CD8-positive, alpha-beta T cell (primary cell): ENCODE measurements at regions of chr6 and their contacts with region 1.

Region 1: DNA sequence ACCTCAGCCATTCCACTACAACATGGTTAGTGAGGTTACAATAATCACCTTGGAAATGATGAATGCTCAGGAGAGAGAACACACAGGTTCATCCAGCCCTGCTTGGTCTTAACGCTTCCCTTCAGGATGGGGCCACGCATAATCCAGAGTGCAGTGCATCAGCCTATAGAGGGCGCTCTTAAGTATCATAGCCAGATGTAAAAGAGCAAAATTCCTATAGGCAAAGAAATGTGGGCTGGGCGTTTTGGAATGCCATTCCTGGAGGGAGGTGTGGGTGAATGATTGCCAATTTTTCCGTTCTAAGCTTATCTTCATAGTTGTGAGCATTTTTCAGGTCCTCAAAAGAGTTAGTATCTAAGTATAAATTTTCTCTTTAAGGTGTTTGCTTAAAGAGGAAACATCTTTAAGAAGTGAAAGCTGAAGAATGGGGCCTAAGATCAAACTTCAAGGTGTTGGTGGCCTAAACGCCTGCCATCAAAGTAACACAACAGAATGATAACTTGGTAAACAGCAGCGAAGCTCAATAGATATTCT is 1.8 kb downstream of the RIPOR2 start:
- DNase-seq: peak in 7 of 9 experiments; percentile 40 to 82 (median 59)
- ATAC-seq: no peak
- H3K4me3 ChIP-seq: peak overlapping the region; percentile 68 to 89
- H3K4me3 Mint-ChIP-seq: peak overlapping the region; percentile 97
- H3K27ac ChIP-seq: peak overlapping the region; percentile 73 to 80
- H3K27ac Mint-ChIP-seq: peak overlapping the region; percentile 95
- H3K4me1 ChIP-seq: peaks cover 49% of the 10 kb centered on the region
- H3K4me1 Mint-ChIP-seq: peaks cover 62% of the 10 kb centered on the region
- H3K27me3 ChIP-seq: no peaks in the 10 kb centered on the region
- H3K27me3 Mint-ChIP-seq: no peaks in the 10 kb centered on the region
- CTCF ChIP-seq: peak; percentile 96

Region 2: GRCh38 chr6:24689964-24690363 is 244.0 kb before region 1 on chr6:
- CTCF ChIA-PET with region 1: no interaction called
- POLR2A ChIA-PET with region 1: no interaction called
- intact Hi-C with region 1: no loop called
- DNase-seq: no peak
- ATAC-seq: no peak
- H3K4me3 ChIP-seq: no peak overlapping the region
- H3K4me3 Mint-ChIP-seq: no peak overlapping the region
- H3K27ac ChIP-seq: no peak overlapping the region
- H3K27ac Mint-ChIP-seq: no peak overlapping the region
- H3K4me1 ChIP-seq: peaks cover 10% of the 10 kb centered on the region
- H3K4me1 Mint-ChIP-seq: peaks cover 11% of the 10 kb centered on the region
- H3K27me3 ChIP-seq: no peaks in the 10 kb centered on the region
- H3K27me3 Mint-ChIP-seq: no peaks in the 10 kb centered on the region
- CTCF ChIP-seq: no peak

Region 3: DNA sequence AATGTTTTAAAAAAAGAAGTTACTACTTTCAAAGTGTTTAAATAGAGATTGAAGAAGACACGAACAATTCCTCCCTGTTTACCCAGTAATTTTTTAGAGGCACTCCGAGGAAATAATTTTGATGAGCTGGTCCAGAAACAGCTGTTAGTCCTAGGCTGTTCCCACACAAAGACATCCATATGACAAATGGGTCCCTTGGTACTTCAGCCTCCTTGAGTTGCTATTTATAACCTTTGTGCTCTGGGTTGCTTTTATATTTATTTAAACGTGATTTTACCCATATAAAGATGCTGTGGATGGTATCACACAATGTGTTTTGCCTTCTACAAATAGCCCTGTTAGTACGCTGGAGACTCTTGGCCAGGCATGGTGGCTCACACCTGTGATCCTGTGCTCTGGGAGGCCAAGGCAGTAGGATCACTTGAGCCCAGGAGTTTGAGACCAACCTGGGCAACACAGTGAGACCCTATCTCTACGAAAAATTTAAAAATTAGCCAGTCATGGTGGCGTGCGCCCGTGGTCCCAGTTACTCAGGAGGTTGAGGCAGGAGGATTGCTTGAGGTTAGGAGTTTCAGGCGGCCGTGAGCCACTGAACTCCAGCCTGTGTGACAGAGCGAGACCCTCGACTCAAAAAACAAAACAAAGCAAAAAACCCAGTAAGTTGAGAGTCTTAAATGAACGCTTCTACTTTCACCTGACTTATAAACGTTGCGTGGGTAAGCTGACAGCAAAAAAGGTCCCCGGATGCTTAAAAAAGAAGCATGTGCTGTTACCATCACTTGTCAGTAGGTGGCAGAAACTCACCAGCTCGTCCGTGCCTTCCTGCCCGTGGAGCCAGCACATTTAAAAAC is 78.3 kb before region 1 on chr6:
- CTCF ChIA-PET with region 1: interaction called, 43 read pairs
- POLR2A ChIA-PET with region 1: interaction called, 19 read pairs
- intact Hi-C with region 1: loop called (anchors 1 to 2 kb)
- DNase-seq: peak; percentile 39 to 90 (median 67)
- ATAC-seq: peak; percentile 69
- H3K4me3 ChIP-seq: no peak overlapping the region
- H3K4me3 Mint-ChIP-seq: peak overlapping the region; percentile 36
- H3K27ac ChIP-seq: peak overlapping the region in 1 of 2 experiments; percentile 52
- H3K27ac Mint-ChIP-seq: peak overlapping the region; percentile 96
- H3K4me1 ChIP-seq: peaks cover 53% of the 10 kb centered on the region
- H3K4me1 Mint-ChIP-seq: peaks cover 61% of the 10 kb centered on the region
- H3K27me3 ChIP-seq: no peaks in the 10 kb centered on the region
- H3K27me3 Mint-ChIP-seq: no peaks in the 10 kb centered on the region
- CTCF ChIP-seq: peak; percentile 77

Region 4: DNA sequence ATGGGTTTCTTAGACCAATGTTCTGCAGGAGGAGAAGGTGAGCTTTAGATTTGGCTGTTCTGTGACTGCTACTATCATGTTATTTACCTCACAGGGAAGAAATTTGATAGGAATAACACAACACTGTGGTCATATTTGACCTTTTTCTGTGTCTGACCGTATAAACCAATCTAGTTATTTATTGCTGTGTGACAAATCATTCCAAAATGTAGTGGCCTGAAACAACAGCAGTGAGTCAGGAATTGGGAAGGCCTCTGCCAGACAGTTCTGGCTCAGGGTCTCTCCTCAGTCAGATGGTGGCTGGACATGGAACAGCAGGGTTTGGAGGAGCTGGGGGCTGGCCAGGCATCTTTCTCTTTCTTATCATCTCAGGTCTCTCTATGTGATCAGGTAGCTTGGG is 31.2 kb before region 1 on chr6:
- CTCF ChIA-PET with region 1: interaction called, 161 read pairs
- POLR2A ChIA-PET with region 1: interaction called, 9 read pairs
- intact Hi-C with region 1: loop called in 1 of 2 experiments (anchors 5 kb)
- DNase-seq: no peak
- ATAC-seq: no peak
- H3K4me3 ChIP-seq: no peak overlapping the region
- H3K4me3 Mint-ChIP-seq: peak overlapping the region; percentile 44
- H3K27ac ChIP-seq: peak overlapping the region; percentile 12 to 63
- H3K27ac Mint-ChIP-seq: peak overlapping the region; percentile 94
- H3K4me1 ChIP-seq: peaks cover 97% of the 10 kb centered on the region
- H3K4me1 Mint-ChIP-seq: peaks cover 94% of the 10 kb centered on the region
- H3K27me3 ChIP-seq: no peaks in the 10 kb centered on the region
- H3K27me3 Mint-ChIP-seq: no peaks in the 10 kb centered on the region
- CTCF ChIP-seq: no peak

Region 5: GRCh38 chr6:24949020-24949569 is 15.2 kb after region 1 on chr6:
- CTCF ChIA-PET with region 1: interaction called, 239 read pairs
- POLR2A ChIA-PET with region 1: interaction called, 404 read pairs
- intact Hi-C with region 1: loop called (anchors 1 kb)
- DNase-seq: peak in 7 of 9 experiments; percentile 47 to 89 (median 73)
- ATAC-seq: peak; percentile 55
- H3K4me3 ChIP-seq: peak overlapping the region; percentile 9 to 38
- H3K4me3 Mint-ChIP-seq: peak overlapping the region; percentile 69
- H3K27ac ChIP-seq: peak overlapping the region; percentile 50 to 76
- H3K27ac Mint-ChIP-seq: peak overlapping the region; percentile 91
- H3K4me1 ChIP-seq: peaks cover 69% of the 10 kb centered on the region
- H3K4me1 Mint-ChIP-seq: peaks cover 74% of the 10 kb centered on the region
- H3K27me3 ChIP-seq: no peaks in the 10 kb centered on the region
- H3K27me3 Mint-ChIP-seq: no peaks in the 10 kb centered on the region
- CTCF ChIP-seq: no peak

Region 6: GRCh38 chr6:24974182-24975171 is 40.5 kb after region 1 on chr6:
- CTCF ChIA-PET with region 1: interaction called, 70 read pairs
- POLR2A ChIA-PET with region 1: interaction called, 11 read pairs
- intact Hi-C with region 1: no loop called
- DNase-seq: peak in 4 of 9 experiments; percentile 33 to 70 (median 42)
- ATAC-seq: peak; percentile 84
- H3K4me3 ChIP-seq: no peak overlapping the region
- H3K4me3 Mint-ChIP-seq: peak overlapping the region; percentile 13
- H3K27ac ChIP-seq: peak overlapping the region in 1 of 2 experiments; percentile 73
- H3K27ac Mint-ChIP-seq: peak overlapping the region; percentile 89
- H3K4me1 ChIP-seq: peaks cover 39% of the 10 kb centered on the region
- H3K4me1 Mint-ChIP-seq: peaks cover 65% of the 10 kb centered on the region
- H3K27me3 ChIP-seq: no peaks in the 10 kb centered on the region
- H3K27me3 Mint-ChIP-seq: no peaks in the 10 kb centered on the region
- CTCF ChIP-seq: no peak

Region 7: GRCh38 chr6:25027221-25027916 is 93.4 kb after region 1 on chr6:
- CTCF ChIA-PET with region 1: interaction called, 16 read pairs
- POLR2A ChIA-PET with region 1: no interaction called
- intact Hi-C with region 1: no loop called
- DNase-seq: peak; percentile 43 to 89 (median 72)
- ATAC-seq: peak; percentile 94
- H3K4me3 ChIP-seq: peak overlapping the region; percentile 37 to 43
- H3K4me3 Mint-ChIP-seq: peak overlapping the region; percentile 75
- H3K27ac ChIP-seq: peak overlapping the region in 1 of 2 experiments; percentile 63
- H3K27ac Mint-ChIP-seq: peak overlapping the region; percentile 90
- H3K4me1 ChIP-seq: peaks cover 31% of the 10 kb centered on the region
- H3K4me1 Mint-ChIP-seq: peaks cover 43% of the 10 kb centered on the region
- H3K27me3 ChIP-seq: no peaks in the 10 kb centered on the region
- H3K27me3 Mint-ChIP-seq: no peaks in the 10 kb centered on the region
- CTCF ChIP-seq: peak; percentile 60